B cell (primary cell): ENCODE measurements at regions of chr20 and their contacts with region 1.

Region 1: GRCh38 chr20:62642040-62642665 is at the start of gene SLCO4A1:
- DNase-seq: peak; percentile 90
- ATAC-seq: peak; percentile 89
- H3K4me3 ChIP-seq: peak within 1 kb of the TSS; percentile 9 to 77 (median 65)
- H3K4me3 Mint-ChIP-seq: peak within 1 kb of the TSS; percentile 89
- H3K27ac ChIP-seq: no peak within 1 kb of the TSS
- H3K27ac Mint-ChIP-seq: peak within 1 kb of the TSS; percentile 88
- H3K4me1 ChIP-seq: peaks cover 43 to 53% of the 10 kb centered on the region in 2 donors
- H3K4me1 Mint-ChIP-seq: peaks cover 43% of the 10 kb centered on the region
- H3K27me3 ChIP-seq: peaks cover 0 to 3% (median 0%) of the 10 kb centered on the region in 4 experiments
- H3K27me3 Mint-ChIP-seq: no peaks in the 10 kb centered on the region
- CTCF ChIP-seq: no peak
- total RNA-seq, gene SLCO4A1: 79.2 and 79.5 TPM in 2 replicates

Region 2: GRCh38 chr20:62595491-62595890 is 46.7 kb before region 1 on chr20:
- CTCF ChIA-PET with region 1: no interaction called
- POLR2A ChIA-PET with region 1: no interaction called
- intact Hi-C with region 1: no loop called
- DNase-seq: no peak
- ATAC-seq: no peak
- H3K4me3 ChIP-seq: no peak overlapping the region
- H3K4me3 Mint-ChIP-seq: no peak overlapping the region
- H3K27ac ChIP-seq: no peak overlapping the region
- H3K27ac Mint-ChIP-seq: no peak overlapping the region
- H3K4me1 ChIP-seq: peaks cover 12 to 16% of the 10 kb centered on the region in 2 donors
- H3K4me1 Mint-ChIP-seq: peaks cover 28% of the 10 kb centered on the region
- H3K27me3 ChIP-seq: peaks cover 0 to 23% (median 6%) of the 10 kb centered on the region in 4 experiments
- H3K27me3 Mint-ChIP-seq: peaks cover 26% of the 10 kb centered on the region
- CTCF ChIP-seq: no peak

Region 3: GRCh38 chr20:62652051-62652926 is 10.1 kb after region 1 on chr20:
- CTCF ChIA-PET with region 1: interaction called, 18 read pairs
- POLR2A ChIA-PET with region 1: interaction called, 41 read pairs
- intact Hi-C with region 1: loop called (anchors 1 kb)
- DNase-seq: peak; percentile 86
- ATAC-seq: peak; percentile 65
- H3K4me3 ChIP-seq: peak overlapping the region in 4 of 5 experiments; percentile 18 to 57 (median 44)
- H3K4me3 Mint-ChIP-seq: peak overlapping the region; percentile 87
- H3K27ac ChIP-seq: peak overlapping the region; percentile 85 to 91
- H3K27ac Mint-ChIP-seq: peak overlapping the region; percentile 96
- H3K4me1 ChIP-seq: peaks cover 51 to 57% of the 10 kb centered on the region in 2 donors
- H3K4me1 Mint-ChIP-seq: peaks cover 59% of the 10 kb centered on the region
- H3K27me3 ChIP-seq: no peaks in the 10 kb centered on the region
- H3K27me3 Mint-ChIP-seq: no peaks in the 10 kb centered on the region
- CTCF ChIP-seq: no peak